T-cell (primary cell): ENCODE measurements at regions of chr2 and their contacts with region 1.

Region 1: DNA sequence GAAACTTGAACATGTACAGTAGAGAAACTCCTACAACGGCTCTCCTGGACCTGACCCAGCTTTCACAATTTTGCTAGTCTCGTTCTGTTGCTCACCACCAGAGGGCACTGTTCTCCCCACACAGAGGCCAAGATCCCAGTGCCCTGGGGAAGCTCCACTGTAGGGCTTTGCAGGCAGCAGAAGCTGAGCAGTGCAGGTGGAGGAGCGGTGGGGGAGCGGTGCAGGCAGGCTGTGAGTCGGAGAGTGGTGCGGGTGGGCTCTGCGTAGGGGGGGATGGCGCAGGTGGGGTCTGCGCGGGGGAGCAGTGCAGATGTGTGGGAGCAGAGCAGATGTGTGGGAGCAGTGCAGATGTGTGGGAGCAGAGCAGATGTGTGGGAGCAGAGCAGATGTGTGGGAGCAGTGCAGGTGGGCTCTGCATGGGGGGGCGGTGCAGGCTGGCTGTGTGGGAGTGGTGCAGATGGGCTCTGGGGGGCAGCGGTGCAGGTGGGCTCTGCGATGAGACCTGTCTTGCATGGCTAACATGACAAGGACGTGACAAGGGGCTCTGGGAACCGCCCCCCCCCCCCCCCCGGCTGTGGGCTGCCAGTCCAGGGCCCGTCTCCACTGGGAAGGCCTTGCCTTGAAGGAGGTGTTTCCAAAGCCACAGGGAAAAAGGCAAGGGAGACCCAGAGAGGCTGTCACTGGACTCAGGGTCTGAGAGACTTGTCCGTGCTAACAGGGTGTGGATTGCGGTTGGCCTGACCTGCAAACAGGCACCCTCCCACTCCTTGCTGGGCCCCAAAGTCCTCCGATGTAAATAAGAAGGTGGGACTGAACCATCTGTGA is 7.3 kb downstream of the CYS1 start:
- DNase-seq: peak; percentile 43 to 91 (median 72)
- ATAC-seq: peak; percentile 81 to 93 (median 87)
- H3K4me3 ChIP-seq: no peak overlapping the region
- H3K4me3 Mint-ChIP-seq: no peak overlapping the region
- H3K27ac ChIP-seq: no peak overlapping the region
- H3K27ac Mint-ChIP-seq: no peak overlapping the region
- H3K4me1 ChIP-seq: peaks cover 0 to 5% of the 10 kb centered on the region in 2 experiments
- H3K4me1 Mint-ChIP-seq: peaks cover 3 to 6% (median 3%) of the 10 kb centered on the region in 3 donors
- H3K27me3 ChIP-seq: peaks cover 2 to 53% of the 10 kb centered on the region in 2 experiments
- H3K27me3 Mint-ChIP-seq: peaks cover 32 to 50% of the 10 kb centered on the region in 2 donors

Region 2: GRCh38 chr2:9984217-9984739 is 88.6 kb before region 1 on chr2:
- CTCF ChIA-PET with region 1: interaction called, 4 to 14 read pairs
- POLR2A ChIA-PET with region 1: no interaction called
- DNase-seq: peak in 4 of 35 experiments; percentile 11 to 82 (median 28)
- ATAC-seq: peak; percentile 64 to 78 (median 72)
- H3K4me3 ChIP-seq: no peak overlapping the region
- H3K4me3 Mint-ChIP-seq: no peak overlapping the region
- H3K27ac ChIP-seq: no peak overlapping the region
- H3K27ac Mint-ChIP-seq: no peak overlapping the region
- H3K4me1 ChIP-seq: peaks cover 0 to 3% of the 10 kb centered on the region in 2 experiments
- H3K4me1 Mint-ChIP-seq: peaks cover 13 to 18% (median 14%) of the 10 kb centered on the region in 3 donors
- H3K27me3 ChIP-seq: peaks cover 0 to 17% of the 10 kb centered on the region in 2 experiments
- H3K27me3 Mint-ChIP-seq: peaks cover 0 to 2% of the 10 kb centered on the region in 2 donors

Region 3: DNA sequence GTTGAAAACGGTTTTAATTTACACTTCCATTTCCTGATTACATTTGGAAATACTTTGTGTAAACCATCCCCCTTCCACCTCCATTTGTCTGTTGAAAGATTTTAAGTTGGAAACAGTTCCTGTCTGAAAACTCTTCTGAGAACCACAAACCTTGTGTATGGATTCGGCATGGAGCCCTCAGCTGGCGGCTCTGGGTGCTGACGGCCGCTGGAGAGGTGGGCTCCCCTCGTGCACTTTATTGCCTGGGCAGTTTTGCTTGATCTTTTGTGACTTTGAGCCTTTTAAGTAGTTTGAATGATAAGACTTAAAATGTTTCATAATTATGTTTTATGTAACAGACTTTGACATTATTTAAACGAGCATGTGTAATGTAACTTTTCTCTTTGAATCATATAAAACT is 18.4 kb before region 1 on chr2:
- CTCF ChIA-PET with region 1: no interaction called
- POLR2A ChIA-PET with region 1: no interaction called
- DNase-seq: no peak
- ATAC-seq: no peak
- H3K4me3 ChIP-seq: no peak overlapping the region
- H3K4me3 Mint-ChIP-seq: no peak overlapping the region
- H3K27ac ChIP-seq: no peak overlapping the region
- H3K27ac Mint-ChIP-seq: no peak overlapping the region
- H3K4me1 ChIP-seq: peaks cover 0 to 6% of the 10 kb centered on the region in 2 experiments
- H3K4me1 Mint-ChIP-seq: peaks cover 5 to 6% (median 6%) of the 10 kb centered on the region in 3 donors
- H3K27me3 ChIP-seq: peaks cover 0 to 22% of the 10 kb centered on the region in 2 experiments
- H3K27me3 Mint-ChIP-seq: peaks cover 0 to 3% of the 10 kb centered on the region in 2 donors

Region 4: DNA sequence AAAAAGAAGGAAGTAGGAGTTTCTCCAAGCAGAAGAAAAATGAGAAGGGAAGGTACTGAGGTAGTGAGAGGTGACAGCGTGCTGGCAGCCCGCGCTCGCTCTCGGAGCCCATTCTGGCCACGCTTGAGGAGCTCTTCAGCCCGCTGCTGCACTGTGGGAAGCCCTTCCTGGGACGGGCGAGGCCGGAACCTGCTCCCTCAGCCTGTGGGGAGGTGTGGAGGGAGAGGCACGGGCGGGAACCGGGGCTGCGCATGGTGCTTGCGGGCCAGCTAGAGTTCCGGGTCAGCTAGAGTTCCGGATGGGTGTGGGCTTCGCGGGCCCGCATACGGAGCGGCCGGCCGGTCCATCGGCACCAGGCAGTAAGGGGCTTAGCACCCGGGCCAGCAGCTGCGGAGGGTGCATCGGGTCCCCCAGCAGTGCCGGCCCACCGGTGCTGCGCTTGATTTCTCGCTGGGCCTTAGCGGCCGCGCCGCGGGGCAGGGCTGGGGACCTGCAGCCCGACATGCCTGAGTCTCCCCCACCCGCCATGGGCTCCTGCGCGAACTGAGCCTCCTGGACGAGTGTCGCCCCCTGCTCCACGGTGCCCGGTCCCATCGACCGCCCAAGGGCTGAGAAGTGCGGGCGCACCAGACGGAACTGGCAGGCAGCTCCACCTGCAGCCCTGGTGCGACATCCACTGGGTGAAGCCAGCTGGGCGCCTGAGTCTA is 18.5 kb after region 1 on chr2:
- CTCF ChIA-PET with region 1: interaction called, 20 to 28 read pairs
- POLR2A ChIA-PET with region 1: no interaction called
- DNase-seq: peak in 11 of 35 experiments; percentile 3 to 40 (median 19)
- ATAC-seq: peak; percentile 34 to 70 (median 52)
- H3K4me3 ChIP-seq: peak overlapping the region; percentile 5 to 25
- H3K4me3 Mint-ChIP-seq: peak overlapping the region; percentile 43 to 79 (median 66)
- H3K27ac ChIP-seq: no peak overlapping the region
- H3K27ac Mint-ChIP-seq: no peak overlapping the region
- H3K4me1 ChIP-seq: peaks cover 0 to 8% of the 10 kb centered on the region in 2 experiments
- H3K4me1 Mint-ChIP-seq: peaks cover 5 to 6% (median 6%) of the 10 kb centered on the region in 3 donors
- H3K27me3 ChIP-seq: peaks cover 3 to 66% of the 10 kb centered on the region in 2 experiments
- H3K27me3 Mint-ChIP-seq: peaks cover 65 to 76% of the 10 kb centered on the region in 2 donors

Region 5: GRCh38 chr2:10097352-10098148 is 24.7 kb after region 1 on chr2:
- CTCF ChIA-PET with region 1: interaction called, 20 to 28 read pairs
- POLR2A ChIA-PET with region 1: interaction called in 1 of 2 experiments, 4 read pairs
- DNase-seq: peak in 11 of 35 experiments; percentile 12 to 56 (median 27)
- ATAC-seq: peak; percentile 43 to 66 (median 60)
- H3K4me3 ChIP-seq: no peak overlapping the region
- H3K4me3 Mint-ChIP-seq: no peak overlapping the region
- H3K27ac ChIP-seq: no peak overlapping the region
- H3K27ac Mint-ChIP-seq: no peak overlapping the region
- H3K4me1 ChIP-seq: peaks cover 0 to 4% of the 10 kb centered on the region in 2 experiments
- H3K4me1 Mint-ChIP-seq: no peaks in the 10 kb centered on the region
- H3K27me3 ChIP-seq: peaks cover 0 to 44% of the 10 kb centered on the region in 2 experiments
- H3K27me3 Mint-ChIP-seq: peaks cover 39 to 48% of the 10 kb centered on the region in 2 donors

Region 6: GRCh38 chr2:10239561-10239967 is 166.7 kb after region 1 on chr2:
- CTCF ChIA-PET with region 1: no interaction called
- POLR2A ChIA-PET with region 1: no interaction called
- DNase-seq: no peak
- ATAC-seq: no peak
- H3K4me3 ChIP-seq: no peak overlapping the region
- H3K4me3 Mint-ChIP-seq: no peak overlapping the region
- H3K27ac ChIP-seq: no peak overlapping the region
- H3K27ac Mint-ChIP-seq: no peak overlapping the region
- H3K4me1 ChIP-seq: peaks cover 0 to 4% of the 10 kb centered on the region in 2 experiments
- H3K4me1 Mint-ChIP-seq: peaks cover 0 to 2% (median 0%) of the 10 kb centered on the region in 3 donors
- H3K27me3 ChIP-seq: peaks cover 0 to 42% of the 10 kb centered on the region in 2 experiments
- H3K27me3 Mint-ChIP-seq: peaks cover 0 to 2% of the 10 kb centered on the region in 2 donors

Region 7: DNA sequence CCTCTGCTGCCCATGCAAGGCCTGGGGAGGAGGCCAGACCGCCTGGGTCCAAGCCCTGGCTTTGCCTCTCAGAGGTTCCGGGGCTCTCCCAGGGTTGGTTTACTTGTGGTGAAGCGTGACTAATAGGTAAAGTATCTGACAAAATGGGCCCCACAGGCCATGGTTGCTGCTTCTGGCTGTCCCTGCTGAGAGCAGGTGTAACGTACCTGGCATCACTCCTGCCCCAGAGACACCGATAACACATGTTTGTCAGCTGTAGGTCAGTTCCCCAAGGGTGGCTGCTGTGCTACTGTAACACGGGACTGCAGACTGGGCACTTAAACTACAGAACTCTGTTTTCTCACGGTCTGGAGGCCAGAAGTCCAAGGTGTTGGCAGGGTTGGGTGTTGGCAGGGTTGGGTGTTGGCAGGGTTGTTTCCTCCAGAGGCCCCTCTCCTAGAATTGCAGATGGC is 341.2 kb after region 1 on chr2:
- CTCF ChIA-PET with region 1: interaction called, 8 to 25 read pairs
- POLR2A ChIA-PET with region 1: interaction called in 1 of 2 experiments, 15 read pairs
- DNase-seq: no peak
- ATAC-seq: no peak
- H3K4me3 ChIP-seq: no peak overlapping the region
- H3K4me3 Mint-ChIP-seq: no peak overlapping the region
- H3K27ac ChIP-seq: no peak overlapping the region
- H3K27ac Mint-ChIP-seq: no peak overlapping the region
- H3K4me1 ChIP-seq: peaks cover 0 to 5% of the 10 kb centered on the region in 2 experiments
- H3K4me1 Mint-ChIP-seq: peaks cover 8 to 17% (median 10%) of the 10 kb centered on the region in 3 donors
- H3K27me3 ChIP-seq: no peaks in the 10 kb centered on the region
- H3K27me3 Mint-ChIP-seq: no peaks in the 10 kb centered on the region

Region 8: DNA sequence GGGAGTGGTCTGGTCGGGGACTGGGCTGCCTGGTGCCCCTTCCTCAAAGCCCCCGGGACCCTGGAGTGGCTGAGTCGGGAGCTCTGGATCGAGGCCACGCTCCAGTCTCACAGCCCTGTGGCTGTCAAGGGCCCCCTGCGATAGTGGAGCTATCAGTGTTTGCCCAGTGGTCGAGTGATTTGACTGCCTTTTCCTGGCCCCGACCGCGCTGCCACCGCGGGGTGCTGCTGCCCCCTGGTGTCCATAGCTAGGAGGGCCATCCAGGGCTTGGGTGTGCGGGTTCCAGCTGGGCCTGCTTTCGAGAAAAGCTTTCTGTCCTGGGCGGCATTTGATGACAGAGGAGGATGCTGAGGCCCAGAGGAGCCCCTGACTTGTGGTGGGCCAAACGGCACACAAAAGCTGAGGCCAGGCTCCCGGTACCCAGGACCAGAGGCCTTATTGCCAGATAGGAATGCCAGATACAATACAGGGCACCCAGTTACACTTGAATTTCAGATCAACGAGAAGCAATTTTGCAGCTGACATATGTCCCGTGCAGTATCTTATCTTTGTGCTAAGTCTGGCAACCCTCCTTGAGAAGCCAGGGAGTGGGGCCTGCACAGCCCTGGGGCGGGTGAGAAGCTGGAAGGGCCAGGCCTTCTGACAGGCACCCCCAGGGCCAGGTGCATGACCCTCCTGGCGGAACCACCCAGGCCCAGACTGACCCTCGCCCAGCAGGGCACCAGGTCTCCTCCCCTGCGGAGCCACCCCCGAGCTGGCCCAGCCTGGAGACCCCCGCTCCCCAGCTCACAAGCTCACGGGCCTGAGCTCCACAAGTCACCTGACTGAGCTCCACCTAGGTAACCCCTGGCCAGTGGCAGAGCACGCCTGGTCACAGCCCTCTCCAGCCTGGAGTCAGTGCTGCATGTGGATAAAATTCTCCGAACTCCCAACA is 362.3 kb after region 1 on chr2:
- CTCF ChIA-PET with region 1: interaction called, 24 to 84 read pairs
- POLR2A ChIA-PET with region 1: no interaction called
- DNase-seq: peak in 34 of 35 experiments; percentile 23 to 86 (median 59)
- ATAC-seq: peak; percentile 64 to 72 (median 66)
- H3K4me3 ChIP-seq: no peak overlapping the region
- H3K4me3 Mint-ChIP-seq: no peak overlapping the region
- H3K27ac ChIP-seq: no peak overlapping the region
- H3K27ac Mint-ChIP-seq: no peak overlapping the region
- H3K4me1 ChIP-seq: peaks cover 0 to 22% of the 10 kb centered on the region in 2 experiments
- H3K4me1 Mint-ChIP-seq: peaks cover 11 to 18% (median 14%) of the 10 kb centered on the region in 3 donors
- H3K27me3 ChIP-seq: peaks cover 0 to 30% of the 10 kb centered on the region in 2 experiments
- H3K27me3 Mint-ChIP-seq: peaks cover 3 to 4% of the 10 kb centered on the region in 2 donors